Activated T-helper 1 cell treated with anti-CD3 and anti-CD28 coated beads, Interleukin-12 subunit alpha, Interleukin-12 subunit beta, Interleukin-2, Interleukin-4 antibody, amounts not matched to agents 30 ng/mL and 10 ng/mL and 1 ng/mL, durations not matched to agents 14 hours and 24 hours and 36 hours (primary cell): ENCODE measurements at regions of chr7 and their contacts with region 1.

Region 1: DNA sequence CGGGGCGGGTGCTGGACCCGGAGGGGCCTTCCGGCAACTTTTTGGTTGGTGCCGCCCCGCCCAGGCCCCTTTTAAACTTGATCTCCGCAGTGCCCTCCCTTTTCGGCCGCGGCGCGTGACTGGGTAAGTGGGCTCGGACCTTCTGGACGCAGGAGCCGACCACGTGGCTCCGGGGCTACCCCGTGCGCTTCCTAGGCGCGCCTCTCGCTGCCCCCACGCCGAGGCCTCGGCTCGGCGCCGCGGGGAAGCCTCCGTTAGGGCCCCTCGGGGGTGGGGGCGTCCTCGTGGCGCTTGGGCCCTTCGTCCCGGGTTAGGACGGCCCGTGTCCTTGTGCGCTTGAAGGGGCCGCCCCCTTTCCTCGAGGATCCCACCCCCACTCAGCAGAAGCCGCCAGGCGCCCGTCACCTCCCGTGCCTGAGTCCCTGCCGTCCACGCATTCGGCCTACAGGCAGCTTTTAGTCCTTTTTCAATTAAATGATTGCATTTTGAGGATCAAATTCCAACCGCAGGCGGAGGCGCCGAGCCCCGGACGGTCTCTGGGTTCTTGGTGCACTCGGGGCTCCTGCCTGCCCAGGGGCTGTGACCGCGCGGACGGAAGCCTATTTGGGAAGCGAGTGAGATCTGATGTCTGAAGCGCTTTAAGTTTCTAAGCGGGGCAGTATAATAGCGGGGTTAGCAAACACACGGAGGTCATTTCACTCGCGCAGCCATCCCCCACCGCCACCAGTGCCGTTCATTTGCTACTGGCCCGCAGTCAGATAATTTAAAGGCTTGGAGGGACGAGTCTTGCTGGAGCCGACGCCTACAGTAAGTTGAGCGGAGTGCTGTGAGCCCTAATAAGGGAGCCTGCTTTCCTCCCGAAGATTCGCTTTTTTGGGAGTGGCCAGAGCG is 31.8 kb upstream of the TOMM7 start:
- DNase-seq: peak; percentile 75
- H3K4me3 Mint-ChIP-seq: peak overlapping the region; percentile 98
- H3K27ac Mint-ChIP-seq: peak overlapping the region; percentile 96
- H3K4me1 Mint-ChIP-seq: peaks cover 34% of the 10 kb centered on the region
- H3K27me3 Mint-ChIP-seq: peaks cover 3% of the 10 kb centered on the region

Region 2: GRCh38 chr7:22559829-22560489 is 294.4 kb before region 1 on chr7:
- intact Hi-C with region 1: loop called (anchors 2 kb)
- DNase-seq: peak; percentile 55
- H3K4me3 Mint-ChIP-seq: no peak overlapping the region
- H3K27ac Mint-ChIP-seq: no peak overlapping the region
- H3K4me1 Mint-ChIP-seq: peaks cover 44% of the 10 kb centered on the region
- H3K27me3 Mint-ChIP-seq: peaks cover 9% of the 10 kb centered on the region

Region 3: GRCh38 chr7:22822486-22823141 is 31.8 kb before region 1 on chr7 and contains the start of gene TOMM7:
- intact Hi-C with region 1: loop called (anchors 1 kb)
- DNase-seq: peak; percentile 81
- H3K4me3 Mint-ChIP-seq: peak within 1 kb of the TSS; percentile 98
- H3K27ac Mint-ChIP-seq: peak within 1 kb of the TSS; percentile 93
- H3K4me1 Mint-ChIP-seq: peaks cover 41% of the 10 kb centered on the region
- H3K27me3 Mint-ChIP-seq: peaks cover 17% of the 10 kb centered on the region
- total RNA-seq, gene TOMM7: 187 and 225 TPM in 2 replicates

Region 4: GRCh38 chr7:22872096-22872807 is 17.8 kb after region 1 on chr7:
- intact Hi-C with region 1: no loop called
- DNase-seq: no peak
- H3K4me3 Mint-ChIP-seq: no peak overlapping the region
- H3K27ac Mint-ChIP-seq: no peak overlapping the region
- H3K4me1 Mint-ChIP-seq: peaks cover 7% of the 10 kb centered on the region
- H3K27me3 Mint-ChIP-seq: peaks cover 6% of the 10 kb centered on the region

Region 5: DNA sequence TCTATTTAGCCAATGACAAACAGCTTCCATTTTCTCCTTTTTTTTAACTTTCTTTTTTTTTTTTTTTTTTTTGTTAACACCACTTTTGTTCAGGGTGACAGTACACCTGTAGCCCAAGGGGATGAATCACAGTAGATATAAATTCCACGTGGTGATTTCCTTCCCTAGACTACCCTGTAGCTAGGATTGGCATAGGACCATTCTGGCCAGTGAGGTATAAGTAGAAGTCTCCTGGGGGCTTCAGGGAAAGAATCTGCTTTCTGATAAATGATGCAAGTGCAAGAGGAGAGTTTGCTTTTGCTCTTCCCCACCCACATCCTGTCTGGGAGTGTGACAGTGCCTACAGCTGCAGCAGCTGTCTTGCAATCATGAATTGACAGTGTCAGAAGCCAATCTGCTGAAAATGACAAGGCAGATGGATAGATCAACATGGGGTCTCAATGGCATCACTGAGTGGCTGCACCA is 31.4 kb after region 1 on chr7:
- intact Hi-C with region 1: loop called (anchors 1 kb)
- DNase-seq: peak; percentile 60
- H3K4me3 Mint-ChIP-seq: peak overlapping the region; percentile 59
- H3K27ac Mint-ChIP-seq: peak overlapping the region; percentile 93
- H3K4me1 Mint-ChIP-seq: peaks cover 41% of the 10 kb centered on the region
- H3K27me3 Mint-ChIP-seq: no peaks in the 10 kb centered on the region

Region 6: GRCh38 chr7:22934473-22935065 is 80.2 kb after region 1 on chr7:
- intact Hi-C with region 1: loop called (anchors 5 kb)
- DNase-seq: no peak
- H3K4me3 Mint-ChIP-seq: no peak overlapping the region
- H3K27ac Mint-ChIP-seq: no peak overlapping the region
- H3K4me1 Mint-ChIP-seq: no peaks in the 10 kb centered on the region
- H3K27me3 Mint-ChIP-seq: no peaks in the 10 kb centered on the region

Region 7: GRCh38 chr7:22992874-22993840 is 138.8 kb after region 1 on chr7:
- intact Hi-C with region 1: loop called (anchors 1 kb)
- DNase-seq: no peak
- H3K4me3 Mint-ChIP-seq: peak overlapping the region; percentile 43
- H3K27ac Mint-ChIP-seq: peak overlapping the region; percentile 77
- H3K4me1 Mint-ChIP-seq: peaks cover 52% of the 10 kb centered on the region
- H3K27me3 Mint-ChIP-seq: no peaks in the 10 kb centered on the region

Region 8: GRCh38 chr7:23105644-23106056 is 251.2 kb after region 1 on chr7 and contains the start of gene KLHL7:
- intact Hi-C with region 1: loop called (anchors 1 kb)
- DNase-seq: peak; percentile 95
- H3K4me3 Mint-ChIP-seq: peak within 1 kb of the TSS; percentile 94
- H3K27ac Mint-ChIP-seq: peak within 1 kb of the TSS; percentile 96
- H3K4me1 Mint-ChIP-seq: peaks cover 30% of the 10 kb centered on the region
- H3K27me3 Mint-ChIP-seq: no peaks in the 10 kb centered on the region
- total RNA-seq, gene KLHL7: 18.2 and 19.7 TPM in 2 replicates